ENCODE measurements at regions of chr1 and their contacts with region 1.

Region 1: GRCh38 chr1:54488779-54489626 is 59.0 kb upstream of the ACOT11 start:
- DNase-seq: peak; percentile 58
- ATAC-seq: peak; percentile 83
- H3K4me3 ChIP-seq: peak overlapping the region; percentile 66 to 77 (median 74)
- H3K27ac ChIP-seq: peak overlapping the region; percentile 79
- H3K4me1 ChIP-seq: peaks cover 59% of the 10 kb centered on the region
- H3K27me3 ChIP-seq: peaks cover 0 to 10% of the 10 kb centered on the region in 2 experiments; a peak in 3 of 5 replicates
- CTCF ChIP-seq: peak; percentile 90
- EP300 ChIP-seq: no peak
- POLR2A ChIP-seq: no peak
- RAD21 ChIP-seq: peak; percentile 98

Region 2: DNA sequence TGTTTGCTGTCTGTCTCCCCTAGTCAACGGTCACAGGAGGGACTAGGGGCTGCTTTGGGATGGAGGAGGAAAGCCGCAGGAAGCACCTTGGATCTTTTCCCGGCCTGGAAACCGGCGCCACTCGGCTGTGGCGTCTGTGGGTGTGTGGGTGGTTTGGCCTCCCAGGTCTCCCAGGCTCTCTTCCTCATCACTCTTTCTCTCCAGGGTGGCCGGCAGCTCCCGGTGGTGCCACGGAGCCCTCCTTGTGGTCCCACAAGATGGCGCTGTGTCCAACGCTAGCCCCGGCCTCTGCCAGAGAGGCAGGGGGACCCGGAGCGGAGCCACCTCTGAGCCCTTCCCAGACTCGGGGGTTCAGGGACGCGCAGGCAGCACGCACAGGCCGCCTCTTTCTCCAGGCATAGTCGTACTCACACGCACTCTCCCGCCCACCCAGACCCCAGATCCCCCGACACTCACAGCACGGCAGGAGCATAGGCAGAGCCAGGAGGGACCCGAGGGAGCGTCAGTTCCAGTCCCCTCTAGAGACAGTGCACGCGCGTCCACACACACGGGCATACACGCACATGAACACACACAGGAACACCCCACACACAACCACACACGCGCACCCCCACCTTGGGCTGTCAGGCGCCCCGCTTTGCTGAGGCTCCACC is 367.4 kb before region 1 on chr1:
- CTCF ChIA-PET with region 1: interaction called, 11 read pairs
- POLR2A ChIA-PET with region 1: interaction called, 3 read pairs
- in situ Hi-C with region 1: loop called (anchors 5 kb)
- intact Hi-C with region 1: loop called (anchors 2 kb)
- DNase-seq: peak; percentile 64
- ATAC-seq: peak; percentile 93
- H3K4me3 ChIP-seq: peak overlapping the region; percentile 55 to 78 (median 60)
- H3K27ac ChIP-seq: no peak overlapping the region
- H3K4me1 ChIP-seq: peaks cover 66% of the 10 kb centered on the region
- H3K27me3 ChIP-seq: peaks cover 6 to 33% of the 10 kb centered on the region in 2 experiments; a peak in 3 of 5 replicates
- CTCF ChIP-seq: peak; percentile 97
- EP300 ChIP-seq: no peak
- POLR2A ChIP-seq: no peak
- RAD21 ChIP-seq: peak; percentile 89

Region 3: DNA sequence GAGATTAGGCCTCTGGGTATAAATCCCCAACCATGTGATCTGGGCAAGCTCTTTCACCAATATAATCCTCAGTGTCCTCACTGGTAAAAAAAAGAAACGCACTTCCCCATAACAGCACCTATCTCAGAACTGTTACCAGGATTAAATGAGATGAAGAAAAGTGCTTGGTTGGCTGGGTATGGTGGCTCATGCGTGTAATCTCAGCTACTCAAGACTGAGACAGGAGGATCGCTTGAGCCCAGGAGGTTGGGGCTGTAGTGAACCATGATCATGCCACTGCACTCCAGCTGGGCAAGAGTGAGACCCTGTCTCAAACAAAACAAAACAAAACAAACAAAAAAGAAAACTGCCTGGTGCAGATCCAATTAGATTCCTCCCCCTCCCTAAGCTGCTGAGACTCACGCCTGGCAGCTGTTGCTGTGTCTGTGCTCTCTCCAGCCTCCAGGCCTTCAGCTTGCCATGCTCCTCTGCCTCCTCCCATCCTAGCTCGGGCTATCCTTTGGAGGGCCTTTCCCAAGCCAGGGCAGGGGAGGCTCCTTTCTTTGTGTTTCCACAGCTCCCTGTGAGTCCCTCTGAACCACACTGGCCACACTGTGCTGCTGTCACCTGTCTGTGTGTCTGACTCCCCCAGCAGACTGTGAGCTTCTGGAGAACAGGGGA is 308.2 kb before region 1 on chr1:
- CTCF ChIA-PET with region 1: interaction called, 10 read pairs
- POLR2A ChIA-PET with region 1: interaction called, 5 read pairs
- in situ Hi-C with region 1: no loop called
- intact Hi-C with region 1: no loop called
- DNase-seq: no peak
- ATAC-seq: no peak
- H3K4me3 ChIP-seq: no peak overlapping the region
- H3K27ac ChIP-seq: no peak overlapping the region
- H3K4me1 ChIP-seq: no peaks in the 10 kb centered on the region
- H3K27me3 ChIP-seq: no peaks in the 10 kb centered on the region
- CTCF ChIP-seq: no peak
- EP300 ChIP-seq: no peak
- POLR2A ChIP-seq: no peak
- RAD21 ChIP-seq: no peak

Region 4: DNA sequence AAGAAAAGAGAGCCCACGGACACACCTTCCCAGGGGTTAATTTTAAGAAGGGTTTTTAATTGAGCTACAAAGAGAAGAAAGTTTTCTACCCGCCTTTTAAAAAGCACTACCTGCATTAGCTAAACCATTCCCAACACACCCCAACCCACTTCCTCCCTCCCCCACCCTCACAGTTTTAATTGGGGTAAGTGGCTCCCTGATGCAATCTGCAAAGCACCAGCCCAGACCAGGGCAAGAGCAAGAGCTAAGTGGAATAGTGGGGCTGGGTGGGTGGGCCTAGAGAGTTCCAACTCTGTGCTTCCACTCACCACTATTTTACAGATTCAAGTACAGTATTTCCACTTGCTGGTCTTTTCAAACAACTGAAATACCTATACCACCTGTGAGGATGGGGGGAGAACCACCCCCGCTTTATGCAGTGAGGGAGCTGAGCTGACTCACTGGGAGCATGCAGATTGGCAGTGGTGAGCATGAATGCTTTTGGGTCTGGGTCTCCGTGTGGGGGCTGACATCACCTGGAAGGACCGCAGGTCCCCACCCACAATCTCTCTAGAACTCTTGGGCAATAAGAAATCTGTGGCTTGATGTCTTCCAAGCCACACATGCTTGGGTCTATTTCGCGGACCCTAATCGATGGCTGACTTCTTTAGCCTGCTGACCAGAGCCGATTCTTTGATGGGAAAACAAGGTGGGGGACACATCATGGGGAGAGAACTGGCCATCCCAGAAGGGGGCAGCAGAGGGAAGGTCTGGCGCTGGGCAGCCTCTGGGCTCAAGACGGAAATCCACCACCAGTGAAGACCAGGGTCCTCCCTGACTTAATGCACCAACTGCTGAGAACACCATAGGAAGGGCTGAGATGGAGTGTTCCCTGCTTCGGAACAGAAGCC is 178.3 kb before region 1 on chr1:
- CTCF ChIA-PET with region 1: interaction called, 18 read pairs
- POLR2A ChIA-PET with region 1: interaction called, 4 read pairs
- in situ Hi-C with region 1: loop called (anchors 10 kb)
- intact Hi-C with region 1: loop called (anchors 1 kb)
- DNase-seq: peak; percentile 39
- ATAC-seq: peak; percentile 84
- H3K4me3 ChIP-seq: no peak overlapping the region
- H3K27ac ChIP-seq: no peak overlapping the region
- H3K4me1 ChIP-seq: peaks cover 9% of the 10 kb centered on the region; the same call in 1 of the 2 replicates
- H3K27me3 ChIP-seq: no peaks in the 10 kb centered on the region
- CTCF ChIP-seq: peak; percentile 83
- EP300 ChIP-seq: no peak
- POLR2A ChIP-seq: no peak
- RAD21 ChIP-seq: peak; percentile 88

Region 5: DNA sequence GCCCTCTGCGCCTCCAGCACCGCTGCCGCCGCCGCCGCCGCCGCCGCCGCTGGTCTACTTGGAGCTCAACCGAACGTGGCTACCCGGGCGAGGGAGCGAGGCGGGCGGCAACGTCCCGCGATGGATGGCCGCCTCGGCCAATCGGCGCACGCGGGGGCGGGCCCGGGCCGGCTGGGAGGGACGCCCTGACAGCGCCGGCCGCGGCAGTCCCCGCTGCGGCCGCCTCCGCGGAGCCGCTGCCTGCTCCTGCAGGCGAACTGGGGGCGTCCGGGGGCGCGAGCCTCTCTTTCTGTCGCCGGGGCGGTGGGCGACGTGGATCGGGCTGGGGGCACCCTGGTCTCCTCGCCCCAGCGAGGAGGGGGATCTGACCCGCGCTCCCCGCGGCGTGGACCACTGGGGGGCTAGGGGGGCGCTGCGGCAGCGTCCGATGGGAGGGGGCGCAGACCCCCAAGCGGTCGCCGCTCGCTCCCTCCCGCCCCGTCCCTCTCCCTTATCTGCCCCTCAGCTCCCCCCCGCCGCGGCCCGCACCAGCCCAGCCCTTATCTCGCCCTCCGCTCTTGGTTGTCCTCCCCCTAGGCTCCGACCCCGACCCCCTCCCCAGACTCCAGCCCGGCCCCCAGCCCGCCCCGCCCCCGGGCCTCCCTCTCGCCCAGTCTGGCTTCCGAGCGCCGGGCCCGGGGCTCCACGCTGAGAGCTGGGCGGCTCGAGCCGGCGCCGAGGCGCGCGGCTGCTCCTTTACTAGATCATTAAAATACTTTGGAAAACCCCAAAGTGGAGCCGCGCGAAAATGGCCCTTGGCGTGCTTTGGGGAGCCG is 82.5 kb before region 1 on chr1 and contains the start of gene SSBP3:
- CTCF ChIA-PET with region 1: no interaction called
- POLR2A ChIA-PET with region 1: interaction called, 29 read pairs
- in situ Hi-C with region 1: loop called (anchors 5 kb)
- intact Hi-C with region 1: loop called (anchors 1 kb)
- DNase-seq: peak; percentile 79
- ATAC-seq: peak; percentile 93
- H3K4me3 ChIP-seq: peak within 1 kb of the TSS; percentile 73 to 97 (median 84)
- H3K27ac ChIP-seq: peak within 1 kb of the TSS; percentile 61
- H3K4me1 ChIP-seq: peaks cover 59% of the 10 kb centered on the region
- H3K27me3 ChIP-seq: no peaks in the 10 kb centered on the region; a peak in 1 of 5 replicates
- CTCF ChIP-seq: peak; percentile 26; the same call in 1 of the 2 replicates
- EP300 ChIP-seq: no peak
- POLR2A ChIP-seq: peak in 1 of 2 experiments; percentile 38; a peak in 1 of 4 replicates
- RAD21 ChIP-seq: peak; percentile 43; the same call in 1 of the 2 replicates
- total RNA-seq, gene SSBP3: 7.5 and 8.5 TPM in 2 replicates

Region 6: GRCh38 chr1:54425152-54425584 is 63.8 kb before region 1 on chr1:
- CTCF ChIA-PET with region 1: no interaction called
- POLR2A ChIA-PET with region 1: no interaction called
- in situ Hi-C with region 1: no loop called
- intact Hi-C with region 1: loop called (anchors 5 kb)
- DNase-seq: peak; percentile 61
- ATAC-seq: peak; percentile 89
- H3K4me3 ChIP-seq: no peak overlapping the region
- H3K27ac ChIP-seq: no peak overlapping the region
- H3K4me1 ChIP-seq: peaks cover 26% of the 10 kb centered on the region
- H3K27me3 ChIP-seq: 0 out of 5 replicates have a peak, but pooled peaks cover 0 to 6% of the 10 kb centered on the region in 2 experiments
- CTCF ChIP-seq: peak; percentile 19
- EP300 ChIP-seq: no peak; a peak in 1 of 4 replicates
- POLR2A ChIP-seq: no peak
- RAD21 ChIP-seq: no peak